Psoas muscle (tissue), 8 donors: ENCODE measurements at regions of chr12 and their contacts with region 1.

Region 1: GRCh38 chr12:108722992-108723766 is 8.1 kb downstream of the CORO1C start:
- DNase-seq: no peak
- ATAC-seq: peak; percentile 65 to 69 (median 66)
- H3K4me3 ChIP-seq: peak overlapping the region; percentile 5
- H3K27ac ChIP-seq: peak overlapping the region; percentile 84
- H3K4me1 ChIP-seq: peaks cover 91% of the 10 kb centered on the region
- H3K27me3 ChIP-seq: no peaks in the 10 kb centered on the region
- CTCF ChIP-seq: no peak

Region 2: GRCh38 chr12:108633534-108634248 is 89.5 kb before region 1 on chr12 and contains the start of gene SELPLG:
- intact Hi-C with region 1: no loop called
- DNase-seq: peak; percentile 55 to 78
- ATAC-seq: peak in 3 of 4 donors; percentile 21 to 25 (median 23)
- H3K4me3 ChIP-seq: peak within 1 kb of the TSS; percentile 38
- H3K27ac ChIP-seq: peak within 1 kb of the TSS; percentile 3
- H3K4me1 ChIP-seq: peaks cover 10% of the 10 kb centered on the region
- H3K27me3 ChIP-seq: peaks cover 0 to 6% (median 0%) of the 10 kb centered on the region in 3 donors
- CTCF ChIP-seq: no peak
- total RNA-seq, gene SELPLG: 1.5 to 2.3 (median 1.8) TPM

Region 3: DNA sequence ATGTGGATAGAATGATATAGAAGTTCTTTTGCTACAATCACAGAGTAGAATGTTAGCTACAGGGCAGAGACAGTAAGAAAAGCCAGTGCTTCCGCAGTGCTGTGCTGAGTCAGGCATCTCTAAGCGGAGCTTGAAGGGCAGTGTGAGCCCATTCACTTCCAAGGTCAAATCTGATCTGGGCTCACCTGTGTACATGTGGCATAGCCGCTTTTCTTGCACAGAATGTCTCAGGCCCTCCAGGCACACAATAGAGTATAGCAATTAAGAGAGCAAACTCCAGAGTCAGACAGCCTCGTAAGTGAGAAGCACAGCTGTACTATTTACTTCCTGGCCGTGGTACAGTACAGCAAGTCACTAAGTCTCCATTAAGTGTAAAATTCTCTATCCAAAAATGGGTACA is 18.7 kb before region 1 on chr12:
- intact Hi-C with region 1: loop called in 1 of 2 experiments (anchors 2 kb)
- DNase-seq: no peak
- ATAC-seq: peak in 3 of 4 donors; percentile 28 to 44 (median 36)
- H3K4me3 ChIP-seq: no peak overlapping the region
- H3K27ac ChIP-seq: peak overlapping the region; percentile 95
- H3K4me1 ChIP-seq: peaks cover 76% of the 10 kb centered on the region
- H3K27me3 ChIP-seq: no peaks in the 10 kb centered on the region
- CTCF ChIP-seq: no peak